Adrenal gland (tissue), 19 donors: ENCODE measurements at regions of chr11 and their contacts with region 1.

Region 1: DNA sequence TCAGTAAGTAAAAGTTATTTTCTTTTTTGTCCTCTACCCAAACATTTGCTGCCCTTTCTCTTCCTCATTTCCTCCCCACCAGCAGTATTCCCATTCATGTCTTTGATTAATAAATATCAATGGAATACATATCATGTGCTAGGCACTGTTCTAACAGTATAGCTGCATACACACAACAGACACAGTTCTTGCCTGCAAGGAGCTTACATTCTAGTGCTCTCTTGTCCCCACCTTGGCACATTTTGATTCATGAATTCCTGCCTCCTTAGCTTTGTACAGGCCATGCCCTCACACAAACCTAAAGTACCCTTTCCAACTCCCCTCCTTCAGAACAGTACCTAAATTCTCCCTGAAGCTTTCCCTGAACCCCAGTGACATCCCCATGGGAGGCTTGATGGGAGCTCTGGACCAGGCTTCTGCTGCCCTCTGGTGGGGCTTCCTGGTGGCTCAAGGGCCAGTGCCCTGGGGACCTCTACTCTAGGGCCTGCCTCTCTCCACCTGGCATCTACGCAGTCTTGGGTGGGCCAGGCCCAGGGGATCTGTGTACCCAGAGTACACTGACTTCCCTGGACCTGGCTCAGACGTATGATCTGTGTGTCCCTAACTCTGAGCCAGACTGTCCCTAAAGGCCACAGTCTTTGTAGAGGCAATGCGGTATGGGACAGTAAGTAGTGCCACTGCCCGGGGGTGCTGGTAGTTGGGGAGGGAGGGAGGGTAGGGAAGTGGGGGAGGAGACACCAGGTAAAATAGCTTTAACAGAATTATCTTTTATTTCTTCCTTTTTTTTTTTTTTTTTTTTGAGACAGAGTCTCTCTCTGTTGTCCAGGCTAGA is 14.1 kb downstream of the RPS13 start:
- DNase-seq: peak; percentile 54 to 81 (median 67)
- H3K4me3 ChIP-seq: no peak overlapping the region
- H3K27ac ChIP-seq: no peak overlapping the region
- H3K4me1 ChIP-seq: no peaks in the 10 kb centered on the region
- H3K27me3 ChIP-seq: no peaks in the 10 kb centered on the region
- CTCF ChIP-seq: peak; percentile 69 to 81 (median 74)
- POLR2A ChIP-seq: no peak

Region 2: GRCh38 chr11:16785520-16786128 is 277.8 kb before region 1 on chr11:
- intact Hi-C with region 1: loop called (anchors 10 kb)
- DNase-seq: peak; percentile 69 to 89 (median 80)
- H3K4me3 ChIP-seq: no peak overlapping the region
- H3K27ac ChIP-seq: no peak overlapping the region
- H3K4me1 ChIP-seq: peaks cover 0 to 7% of the 10 kb centered on the region in 2 donors
- H3K27me3 ChIP-seq: no peaks in the 10 kb centered on the region
- CTCF ChIP-seq: peak; percentile 79 to 86 (median 82)
- POLR2A ChIP-seq: no peak

Region 3: GRCh38 chr11:16815043-16815767 is 248.2 kb before region 1 on chr11:
- intact Hi-C with region 1: loop called in 1 of 2 experiments (anchors 5 kb)
- DNase-seq: peak; percentile 37 to 75 (median 55)
- H3K4me3 ChIP-seq: no peak overlapping the region
- H3K27ac ChIP-seq: peak overlapping the region in 3 of 5 donors; percentile 8 to 81 (median 20)
- H3K4me1 ChIP-seq: no peaks in the 10 kb centered on the region
- H3K27me3 ChIP-seq: no peaks in the 10 kb centered on the region
- CTCF ChIP-seq: no peak
- POLR2A ChIP-seq: no peak

Region 4: DNA sequence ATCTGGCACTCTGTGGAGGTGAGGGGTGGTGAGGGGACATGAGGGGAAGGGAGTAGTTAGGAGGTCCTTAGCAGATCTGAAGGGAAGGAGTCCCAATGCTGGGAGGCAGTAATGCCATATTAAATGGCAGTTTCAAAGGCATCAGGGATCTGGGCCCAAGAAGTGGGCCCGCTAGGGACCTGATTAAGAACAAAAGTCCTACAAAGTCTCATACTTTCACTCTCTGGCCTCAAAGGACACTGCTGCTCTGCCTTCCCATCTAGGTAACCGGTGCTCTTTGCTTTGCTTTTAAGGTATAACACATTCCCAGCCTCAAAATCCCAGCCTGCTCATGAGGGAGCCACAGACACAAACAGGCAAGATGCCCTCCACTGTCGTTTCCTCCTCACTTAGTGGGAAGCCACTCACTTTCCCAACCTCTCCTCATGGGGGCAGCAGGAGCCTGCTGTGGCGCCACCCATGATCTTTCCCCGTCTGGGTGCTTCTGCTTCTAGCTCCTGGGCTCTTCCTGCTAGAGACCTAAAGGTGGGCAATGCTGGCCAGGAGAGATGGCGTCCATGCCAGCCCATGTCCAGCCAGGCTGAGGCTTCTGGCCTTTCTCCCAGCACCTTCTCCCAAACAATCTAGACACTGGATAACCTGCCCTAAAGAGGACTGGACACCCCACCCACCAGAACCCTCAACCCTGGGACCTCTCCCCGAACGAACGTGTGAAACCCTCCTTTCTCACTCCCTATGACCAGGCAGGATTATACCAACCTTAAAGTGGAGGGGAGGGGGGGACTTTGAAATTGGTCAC is 117.5 kb before region 1 on chr11:
- intact Hi-C with region 1: loop called (anchors 5 kb)
- DNase-seq: peak; percentile 34 to 76 (median 62)
- H3K4me3 ChIP-seq: no peak overlapping the region
- H3K27ac ChIP-seq: no peak overlapping the region
- H3K4me1 ChIP-seq: no peaks in the 10 kb centered on the region
- H3K27me3 ChIP-seq: no peaks in the 10 kb centered on the region
- CTCF ChIP-seq: peak; percentile 43 to 70 (median 64)
- POLR2A ChIP-seq: no peak

Region 5: DNA sequence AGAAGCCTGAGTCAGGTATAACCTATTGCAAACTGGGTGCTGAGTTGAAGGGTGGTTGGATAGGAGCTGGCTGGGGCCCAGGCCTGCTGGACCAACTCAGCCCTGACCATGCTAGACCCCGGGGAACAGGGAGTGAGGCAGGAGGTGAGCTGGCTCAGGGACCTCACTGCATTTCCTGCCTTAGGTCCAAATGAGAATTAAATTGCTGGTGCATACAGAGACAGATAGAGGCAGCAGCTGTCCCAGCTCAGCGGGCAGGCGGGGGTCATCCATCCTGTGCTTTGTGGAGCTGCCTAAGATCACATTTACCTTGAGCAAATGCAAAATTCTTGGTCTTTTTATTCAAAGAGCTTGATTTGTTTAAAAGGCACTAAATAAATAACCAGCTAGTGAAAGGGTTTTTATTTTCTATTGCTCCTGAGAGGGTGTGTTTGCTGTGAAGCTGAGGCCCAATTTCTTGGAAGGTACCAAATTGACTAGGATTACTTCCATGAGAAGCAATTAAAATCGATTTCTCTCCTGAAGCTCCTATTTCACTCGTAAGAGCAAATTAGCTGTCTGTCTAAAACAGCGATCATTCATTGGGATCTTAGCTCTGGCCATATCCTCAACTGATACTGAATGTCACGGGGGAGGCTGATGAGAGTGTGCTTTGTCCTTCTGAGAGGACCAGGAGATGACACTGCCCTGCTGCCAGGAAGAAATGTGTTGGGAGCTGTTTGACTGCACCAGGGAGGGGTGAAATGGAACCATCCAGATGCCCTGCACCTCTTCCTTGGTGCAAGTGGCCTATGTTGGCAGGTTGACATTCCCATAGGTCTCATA is 455.9 kb after region 1 on chr11:
- intact Hi-C with region 1: no loop called
- DNase-seq: no peak
- H3K4me3 ChIP-seq: no peak overlapping the region
- H3K27ac ChIP-seq: no peak overlapping the region
- H3K4me1 ChIP-seq: peaks cover 11 to 17% of the 10 kb centered on the region in 2 donors
- H3K27me3 ChIP-seq: peaks cover 4% of the 10 kb centered on the region
- CTCF ChIP-seq: no peak
- POLR2A ChIP-seq: no peak